ENCODE measurements at regions of chr1 and their contacts with region 1.

Region 1: DNA sequence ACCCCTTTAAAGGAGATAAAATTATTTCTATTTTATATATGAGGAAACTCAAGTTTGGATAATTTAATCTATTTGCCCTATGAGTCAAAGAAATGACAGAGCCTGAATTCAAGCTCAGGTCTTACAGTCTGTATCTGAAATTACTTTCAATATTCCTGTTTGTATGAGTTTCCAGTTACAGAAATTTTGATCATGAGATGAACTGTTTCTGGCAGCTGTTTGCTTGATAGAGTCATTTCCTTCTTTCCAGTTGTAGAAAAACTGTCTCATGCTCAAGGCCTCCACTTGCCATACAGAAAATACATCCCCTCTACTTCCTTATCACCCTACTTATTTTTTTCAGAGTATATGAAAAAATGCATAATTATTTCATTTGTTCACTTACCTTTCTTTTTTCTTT is 87.6 kb downstream of the PTPRC start:
- DNase-seq: no peak
- H3K4me3 Mint-ChIP-seq: no peak overlapping the region
- H3K27ac Mint-ChIP-seq: peak overlapping the region; percentile 82
- H3K4me1 Mint-ChIP-seq: peaks cover 63% of the 10 kb centered on the region
- H3K27me3 Mint-ChIP-seq: no peaks in the 10 kb centered on the region

Region 2: GRCh38 chr1:198699167-198700015 is 27.1 kb before region 1 on chr1:
- CTCF ChIA-PET with region 1: interaction called, 3 read pairs
- intact Hi-C with region 1: loop called (anchors 2 kb)
- DNase-seq: peak; percentile 86
- H3K4me3 Mint-ChIP-seq: peak overlapping the region; percentile 19
- H3K27ac Mint-ChIP-seq: peak overlapping the region; percentile 83
- H3K4me1 Mint-ChIP-seq: peaks cover 81% of the 10 kb centered on the region
- H3K27me3 Mint-ChIP-seq: no peaks in the 10 kb centered on the region

Region 3: DNA sequence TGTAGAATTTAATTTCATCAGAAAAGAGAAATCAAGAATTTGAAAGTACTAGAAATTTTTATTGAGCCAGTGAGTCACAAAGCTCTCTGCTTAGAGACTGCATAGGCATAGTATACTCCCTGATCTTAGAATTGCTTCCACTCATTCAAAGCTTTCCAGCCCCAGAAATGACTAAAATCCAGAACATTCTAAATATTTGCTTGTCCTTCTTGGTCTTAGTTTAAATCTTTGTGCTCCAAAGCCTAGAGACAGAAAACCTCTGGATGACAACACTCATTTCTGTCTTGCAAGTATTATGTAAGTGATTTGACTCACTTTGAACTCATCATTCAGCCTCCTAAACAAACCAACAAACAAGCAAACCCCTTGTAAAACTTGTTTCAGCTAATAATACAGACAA is 13.4 kb before region 1 on chr1:
- CTCF ChIA-PET with region 1: interaction called, 3 read pairs
- intact Hi-C with region 1: loop called (anchors 1 kb)
- DNase-seq: no peak
- H3K4me3 Mint-ChIP-seq: no peak overlapping the region
- H3K27ac Mint-ChIP-seq: peak overlapping the region; percentile 56
- H3K4me1 Mint-ChIP-seq: peaks cover 58% of the 10 kb centered on the region
- H3K27me3 Mint-ChIP-seq: no peaks in the 10 kb centered on the region

Region 4: DNA sequence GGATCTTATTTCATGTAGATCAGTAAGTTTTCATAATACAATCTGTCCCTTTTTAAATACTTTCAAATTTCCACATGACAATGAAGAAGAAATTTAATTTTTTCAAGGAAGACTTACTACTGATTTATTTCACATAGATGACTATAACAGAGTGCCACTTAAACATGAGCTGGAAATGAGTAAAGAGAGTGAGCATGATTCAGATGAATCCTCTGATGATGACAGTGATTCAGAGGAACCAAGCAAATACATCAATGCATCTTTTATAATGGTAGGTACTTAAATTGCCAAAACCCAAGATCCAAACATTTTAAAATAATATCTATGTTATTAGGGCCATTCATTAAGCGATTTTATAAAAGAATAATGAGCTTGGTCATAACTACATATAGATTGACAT is 22.8 kb after region 1 on chr1:
- CTCF ChIA-PET with region 1: no interaction called
- intact Hi-C with region 1: loop called (anchors 2 kb)
- DNase-seq: no peak
- H3K4me3 Mint-ChIP-seq: no peak overlapping the region
- H3K27ac Mint-ChIP-seq: peak overlapping the region; percentile 9
- H3K4me1 Mint-ChIP-seq: peaks cover 16% of the 10 kb centered on the region
- H3K27me3 Mint-ChIP-seq: no peaks in the 10 kb centered on the region